Activated CD4-positive, alpha-beta memory T cell treated with anti-CD3 and anti-CD28 coated beads for 36 hours (primary cell): ENCODE measurements at regions of chr2 and their contacts with region 1.

Region 1: GRCh38 chr2:64653349-64654062 is at the start of gene SERTAD2:
- DNase-seq: peak; percentile 86
- H3K4me3 Mint-ChIP-seq: peak within 1 kb of the TSS; percentile 79
- H3K27ac Mint-ChIP-seq: peak within 1 kb of the TSS; percentile 72
- H3K4me1 Mint-ChIP-seq: peaks cover 51% of the 10 kb centered on the region
- H3K27me3 Mint-ChIP-seq: no peaks in the 10 kb centered on the region
- total RNA-seq, gene SERTAD2: 11.3 to 11.4 TPM

Region 2: GRCh38 chr2:64609227-64609941 is 44.1 kb before region 1 on chr2:
- CTCF ChIA-PET with region 1: interaction called, 15 read pairs
- POLR2A ChIA-PET with region 1: interaction called, 9 read pairs
- intact Hi-C with region 1: loop called (anchors 2 kb)
- DNase-seq: peak; percentile 75
- H3K4me3 Mint-ChIP-seq: peak overlapping the region; percentile 57
- H3K27ac Mint-ChIP-seq: no peak overlapping the region
- H3K4me1 Mint-ChIP-seq: peaks cover 26% of the 10 kb centered on the region
- H3K27me3 Mint-ChIP-seq: no peaks in the 10 kb centered on the region

Region 3: GRCh38 chr2:64675860-64676259 is 22.4 kb after region 1 on chr2:
- CTCF ChIA-PET with region 1: interaction called, 22 read pairs
- POLR2A ChIA-PET with region 1: interaction called, 5 read pairs
- intact Hi-C with region 1: loop called (anchors 1 kb)
- DNase-seq: peak; percentile 87
- H3K4me3 Mint-ChIP-seq: no peak overlapping the region
- H3K27ac Mint-ChIP-seq: no peak overlapping the region
- H3K4me1 Mint-ChIP-seq: peaks cover 25% of the 10 kb centered on the region
- H3K27me3 Mint-ChIP-seq: no peaks in the 10 kb centered on the region

Region 4: GRCh38 chr2:64730551-64731262 is 77.2 kb after region 1 on chr2:
- CTCF ChIA-PET with region 1: interaction called, 6 read pairs
- POLR2A ChIA-PET with region 1: interaction called, 3 read pairs
- intact Hi-C with region 1: loop called (anchors 1 kb)
- DNase-seq: peak; percentile 47
- H3K4me3 Mint-ChIP-seq: peak overlapping the region; percentile 80
- H3K27ac Mint-ChIP-seq: peak overlapping the region; percentile 83
- H3K4me1 Mint-ChIP-seq: peaks cover 42% of the 10 kb centered on the region
- H3K27me3 Mint-ChIP-seq: no peaks in the 10 kb centered on the region

Region 5: GRCh38 chr2:64819774-64820696 is 166.5 kb after region 1 on chr2:
- CTCF ChIA-PET with region 1: interaction called, 12 read pairs
- POLR2A ChIA-PET with region 1: interaction called, 3 read pairs
- intact Hi-C with region 1: loop called (anchors 1 kb)
- DNase-seq: peak; percentile 83
- H3K4me3 Mint-ChIP-seq: peak overlapping the region; percentile 36
- H3K27ac Mint-ChIP-seq: peak overlapping the region; percentile 82
- H3K4me1 Mint-ChIP-seq: peaks cover 20% of the 10 kb centered on the region
- H3K27me3 Mint-ChIP-seq: no peaks in the 10 kb centered on the region

Region 6: DNA sequence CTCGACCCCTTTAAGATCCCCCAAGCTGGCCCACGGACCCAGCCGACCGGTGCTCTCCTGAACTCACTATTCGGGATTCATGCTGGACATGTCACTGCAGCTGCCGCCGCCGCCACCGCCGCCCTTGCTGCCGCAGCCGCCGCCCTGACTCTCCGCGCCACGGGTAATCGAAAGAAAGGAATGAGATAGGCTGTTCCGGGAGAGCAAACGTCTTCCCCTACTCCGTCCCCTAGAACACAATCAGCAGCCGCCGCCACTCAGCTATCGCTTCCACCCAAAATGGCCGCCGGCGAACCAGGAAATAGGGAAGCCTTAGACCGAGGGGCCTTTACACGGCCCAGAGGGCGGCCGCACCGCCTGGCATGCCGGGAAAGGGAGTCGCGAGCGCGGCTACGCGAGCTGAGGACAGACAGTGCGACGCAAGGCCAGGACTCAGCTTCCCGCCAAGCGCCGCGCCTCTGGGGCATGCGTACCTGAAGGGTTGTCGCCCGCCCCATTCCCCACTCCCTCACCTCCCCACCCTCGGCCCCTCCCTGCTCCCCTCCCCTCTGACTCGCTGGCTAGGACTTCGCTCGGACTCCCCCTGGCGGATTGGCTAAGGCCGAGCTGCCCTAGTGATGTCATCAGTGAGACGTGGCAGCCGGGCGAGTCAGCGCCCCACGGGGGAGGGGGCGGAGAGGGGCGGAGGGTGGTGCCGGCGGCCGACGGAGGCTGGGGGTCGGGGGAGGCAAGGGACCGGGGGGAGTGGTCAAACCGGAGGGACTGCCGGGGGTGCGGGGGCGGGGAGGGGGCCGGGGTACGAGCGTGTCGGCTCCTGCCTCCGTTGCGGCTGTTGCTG is 476.5 kb after region 1 on chr2 and contains the start of gene RAB1A:
- CTCF ChIA-PET with region 1: no interaction called
- POLR2A ChIA-PET with region 1: no interaction called
- intact Hi-C with region 1: loop called (anchors 1 kb)
- DNase-seq: peak; percentile 100
- H3K4me3 Mint-ChIP-seq: peak within 1 kb of the TSS; percentile 96
- H3K27ac Mint-ChIP-seq: peak within 1 kb of the TSS; percentile 95
- H3K4me1 Mint-ChIP-seq: peaks cover 34% of the 10 kb centered on the region
- H3K27me3 Mint-ChIP-seq: no peaks in the 10 kb centered on the region
- total RNA-seq, gene RAB1A: 84.3 to 84.5 TPM